ENCODE measurements at regions of chr6 and their contacts with region 1.

Region 1: GRCh38 chr6:110873981-110874879 is at the start of gene AMD1:
- DNase-seq: peak; percentile 89 to 98 (median 95)
- H3K4me3 ChIP-seq: peak within 1 kb of the TSS; percentile 95
- H3K4me3 Mint-ChIP-seq: peak within 1 kb of the TSS in 6 of 7 donors; percentile 98 to 99 (median 98)
- H3K27ac ChIP-seq: peak within 1 kb of the TSS; percentile 99
- H3K27ac Mint-ChIP-seq: peak within 1 kb of the TSS; percentile 87 to 99 (median 99)
- H3K4me1 ChIP-seq: peaks cover 31% of the 10 kb centered on the region
- H3K4me1 Mint-ChIP-seq: peaks cover 30 to 37% (median 33%) of the 10 kb centered on the region in 3 donors
- H3K27me3 ChIP-seq: no peaks in the 10 kb centered on the region
- H3K27me3 Mint-ChIP-seq: peaks cover 0 to 2% of the 10 kb centered on the region in 2 donors
- total RNA-seq, gene AMD1: 95.8 to 96.3 TPM

Region 2: DNA sequence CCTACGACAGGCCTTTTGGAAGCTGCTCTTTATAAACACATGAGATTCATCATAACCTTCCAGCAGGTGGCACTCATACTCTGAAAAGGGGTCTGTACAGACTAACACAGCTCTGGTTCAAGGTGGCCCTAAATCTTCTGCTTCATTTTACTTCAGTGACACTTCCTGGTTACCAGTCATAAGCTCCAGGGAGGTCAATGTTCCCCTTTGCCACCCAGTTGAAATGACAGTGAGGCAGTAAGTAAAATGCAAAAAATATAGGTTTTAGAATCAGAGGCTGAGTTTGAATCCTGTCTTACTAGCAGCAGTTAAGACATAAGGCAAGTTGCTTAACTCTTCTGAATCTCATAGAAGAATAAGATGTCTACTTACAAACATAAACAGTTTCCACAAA is 191.8 kb before region 1 on chr6:
- CTCF ChIA-PET with region 1: interaction called, 41 read pairs
- POLR2A ChIA-PET with region 1: interaction called, 22 read pairs
- DNase-seq: peak; percentile 17 to 74 (median 70)
- H3K4me3 ChIP-seq: no peak overlapping the region
- H3K4me3 Mint-ChIP-seq: no peak overlapping the region
- H3K27ac ChIP-seq: no peak overlapping the region
- H3K27ac Mint-ChIP-seq: peak overlapping the region in 7 of 8 donors; percentile 12 to 77 (median 58)
- H3K4me1 ChIP-seq: peaks cover 12% of the 10 kb centered on the region
- H3K4me1 Mint-ChIP-seq: peaks cover 19 to 21% (median 21%) of the 10 kb centered on the region in 3 donors
- H3K27me3 ChIP-seq: no peaks in the 10 kb centered on the region
- H3K27me3 Mint-ChIP-seq: no peaks in the 10 kb centered on the region

Region 3: GRCh38 chr6:110708295-110708950 is 165.8 kb before region 1 on chr6:
- CTCF ChIA-PET with region 1: no interaction called
- POLR2A ChIA-PET with region 1: no interaction called
- DNase-seq: no peak
- H3K4me3 ChIP-seq: no peak overlapping the region
- H3K4me3 Mint-ChIP-seq: no peak overlapping the region
- H3K27ac ChIP-seq: no peak overlapping the region
- H3K27ac Mint-ChIP-seq: peak overlapping the region in 2 of 8 donors; percentile 13 to 42
- H3K4me1 ChIP-seq: no peaks in the 10 kb centered on the region
- H3K4me1 Mint-ChIP-seq: peaks cover 0 to 9% (median 3%) of the 10 kb centered on the region in 3 donors
- H3K27me3 ChIP-seq: no peaks in the 10 kb centered on the region
- H3K27me3 Mint-ChIP-seq: no peaks in the 10 kb centered on the region

Region 4: DNA sequence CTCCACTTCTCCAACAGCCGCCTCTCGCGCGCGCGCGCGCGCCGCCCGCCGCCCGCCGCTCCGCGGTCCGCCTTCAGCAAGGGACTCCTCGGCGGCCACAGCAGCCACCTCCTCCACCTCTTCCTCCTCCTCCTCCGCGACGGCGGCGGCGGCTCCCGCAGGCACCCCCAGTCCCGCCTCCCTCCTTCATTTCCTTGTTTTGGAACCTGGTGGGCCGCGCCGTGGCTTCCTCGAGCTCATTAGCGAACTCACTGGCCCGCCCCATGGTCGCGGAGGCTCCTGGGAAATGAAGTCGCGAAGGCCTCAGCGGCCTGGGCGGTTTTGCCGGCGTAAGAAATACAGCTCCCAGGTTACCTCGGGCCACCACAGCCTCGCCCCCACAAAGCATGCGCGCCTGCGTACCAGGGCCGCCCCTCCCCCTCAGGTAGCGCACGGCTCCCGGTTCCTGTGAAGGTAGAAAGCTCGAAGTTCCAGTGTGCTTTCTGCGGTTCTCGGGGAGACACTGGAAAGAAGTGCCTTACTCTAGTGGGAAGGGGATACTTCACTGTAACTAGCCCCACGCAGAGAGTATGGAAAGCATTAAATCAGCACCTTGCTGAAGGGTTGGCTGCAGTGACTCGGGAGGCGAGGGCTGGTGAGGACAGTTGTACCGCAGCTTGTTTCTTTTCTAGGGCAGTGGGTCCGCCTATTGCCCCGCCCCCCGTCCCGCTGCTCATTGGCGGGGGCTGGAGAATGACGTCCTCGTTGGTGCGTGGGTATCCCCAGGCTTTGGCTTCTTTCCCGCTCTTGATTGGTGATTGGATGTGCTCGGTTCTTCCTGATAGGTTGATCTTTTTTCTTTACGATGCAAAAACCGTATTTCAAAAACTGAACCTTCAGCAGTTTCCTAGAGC is 58.8 kb before region 1 on chr6 and contains the start of gene CDK19:
- CTCF ChIA-PET with region 1: interaction called, 58 read pairs
- POLR2A ChIA-PET with region 1: interaction called, 239 read pairs
- DNase-seq: peak; percentile 98 to 99 (median 99)
- H3K4me3 ChIP-seq: peak within 1 kb of the TSS; percentile 73
- H3K4me3 Mint-ChIP-seq: peak within 1 kb of the TSS; percentile 92 to 100 (median 97)
- H3K27ac ChIP-seq: peak within 1 kb of the TSS; percentile 78
- H3K27ac Mint-ChIP-seq: peak within 1 kb of the TSS; percentile 97 to 100 (median 99)
- H3K4me1 ChIP-seq: peaks cover 22% of the 10 kb centered on the region
- H3K4me1 Mint-ChIP-seq: peaks cover 20 to 37% (median 28%) of the 10 kb centered on the region in 3 donors
- H3K27me3 ChIP-seq: no peaks in the 10 kb centered on the region
- H3K27me3 Mint-ChIP-seq: no peaks in the 10 kb centered on the region
- total RNA-seq, gene CDK19: 8.4 to 9.1 TPM

Region 5: DNA sequence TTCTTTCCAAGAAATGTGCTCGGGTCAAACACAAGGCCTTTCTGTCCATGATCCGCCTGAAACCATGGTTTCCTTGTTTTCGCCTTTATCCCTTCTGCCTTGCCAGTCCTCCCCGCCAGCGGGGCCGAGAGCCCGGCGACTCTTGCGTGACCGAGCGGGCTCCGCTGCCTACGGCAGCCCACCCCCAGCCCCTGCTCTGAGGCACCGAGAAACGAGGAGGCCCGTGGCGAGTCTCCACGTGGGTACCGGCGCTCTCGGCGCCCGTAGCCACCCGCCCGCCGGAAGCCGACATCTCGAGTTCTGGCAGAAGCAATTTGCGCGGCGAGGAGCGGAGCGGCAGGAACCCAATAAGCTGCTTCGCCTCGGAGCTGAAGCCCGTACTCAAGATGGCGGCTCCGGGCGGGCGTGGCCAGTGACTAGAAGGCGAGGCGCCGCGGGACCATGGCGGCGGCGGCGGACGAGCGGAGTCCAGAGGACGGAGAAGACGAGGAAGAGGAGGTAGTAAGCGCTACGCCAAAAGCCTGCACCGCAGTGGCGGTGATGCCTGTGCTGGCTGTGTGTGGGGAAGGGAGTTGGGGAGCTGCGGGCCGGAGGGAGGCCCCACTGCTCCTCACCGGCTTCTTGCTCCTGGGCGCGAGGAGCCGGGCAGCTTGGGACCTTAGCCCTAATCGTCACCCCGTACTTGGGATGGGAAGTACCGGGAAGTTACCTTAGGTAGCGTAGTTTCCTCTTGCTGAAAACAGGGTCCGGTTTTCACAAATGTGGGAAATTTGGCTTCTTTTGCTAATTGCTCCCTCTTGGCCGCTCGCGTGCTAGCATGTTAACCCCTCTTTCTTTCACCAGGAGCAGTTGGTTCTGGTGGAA is 84.3 kb after region 1 on chr6 and contains the start of gene GTF3C6:
- CTCF ChIA-PET with region 1: interaction called, 4 read pairs
- POLR2A ChIA-PET with region 1: interaction called, 52 read pairs
- DNase-seq: peak; percentile 89 to 95 (median 90)
- H3K4me3 ChIP-seq: peak within 1 kb of the TSS; percentile 99
- H3K4me3 Mint-ChIP-seq: peak within 1 kb of the TSS; percentile 95 to 100 (median 98)
- H3K27ac ChIP-seq: peak within 1 kb of the TSS; percentile 93
- H3K27ac Mint-ChIP-seq: peak within 1 kb of the TSS; percentile 73 to 99 (median 98)
- H3K4me1 ChIP-seq: peaks cover 13% of the 10 kb centered on the region
- H3K4me1 Mint-ChIP-seq: peaks cover 13 to 25% (median 21%) of the 10 kb centered on the region in 3 donors
- H3K27me3 ChIP-seq: no peaks in the 10 kb centered on the region
- H3K27me3 Mint-ChIP-seq: peaks cover 6 to 13% of the 10 kb centered on the region in 2 donors
- total RNA-seq, gene GTF3C6: 162 to 163 TPM

Measured in CD8-positive, alpha-beta memory T cell (primary cell).